Head of caudate nucleus (tissue), 42 donors: ENCODE measurements at regions of chr2 and their contacts with region 1.

Region 1: DNA sequence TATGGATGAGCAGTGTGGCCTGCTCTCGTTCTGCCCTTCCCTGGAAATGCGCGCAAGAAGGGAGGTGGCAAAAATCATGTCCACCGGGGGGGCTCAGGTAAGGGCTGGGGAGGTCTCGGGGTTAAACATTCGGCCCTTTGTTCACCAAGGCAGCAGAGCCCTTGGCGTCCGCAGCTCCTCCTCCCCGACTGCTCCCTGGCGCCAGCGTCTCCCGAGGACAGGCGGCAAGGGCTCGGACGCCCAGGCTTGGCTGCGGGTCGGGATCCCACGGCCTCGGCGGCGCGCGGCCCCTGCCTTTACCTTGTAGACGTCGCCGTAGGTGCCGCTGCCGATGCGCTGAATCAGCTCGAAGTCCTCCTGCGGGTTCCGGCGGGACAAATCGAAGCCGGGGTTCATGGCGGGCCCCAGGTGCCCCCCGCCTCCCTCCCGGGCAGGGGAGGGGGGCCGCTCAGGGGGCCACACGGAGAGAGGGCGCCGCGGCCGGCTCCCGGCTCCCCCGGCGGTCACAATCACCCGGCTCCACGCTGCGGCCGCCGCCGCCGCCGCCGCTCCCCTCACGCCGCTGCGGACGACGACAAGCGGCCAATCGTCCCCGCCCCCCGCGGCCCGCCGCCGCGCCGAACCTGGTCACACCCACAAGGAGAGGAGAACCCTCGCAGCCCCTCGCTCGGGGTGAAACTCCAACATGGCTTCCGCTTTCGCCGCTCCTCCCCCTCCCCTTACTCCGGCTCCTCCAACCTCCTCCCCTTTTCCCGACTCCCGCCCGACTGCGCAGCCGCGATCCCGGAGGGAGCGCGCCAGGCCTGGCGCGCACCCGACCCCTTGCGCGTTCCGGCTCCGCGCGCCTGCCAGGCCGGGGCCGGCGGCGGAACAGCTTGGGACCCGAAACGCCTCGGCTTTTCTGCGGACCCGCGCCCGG is at the start of gene MAP4K3:
- DNase-seq: peak; percentile 76 to 96 (median 92)

Region 2: GRCh38 chr2:39338502-39338901 is 98.3 kb before region 1 on chr2:
- intact Hi-C with region 1: no loop called
- DNase-seq: no peak

Region 3: GRCh38 chr2:39642051-39642742 is 205.3 kb after region 1 on chr2:
- intact Hi-C with region 1: no loop called
- DNase-seq: peak in 40 of 42 donors; percentile 18 to 88 (median 67)

Region 4: GRCh38 chr2:39778962-39779851 is 342.4 kb after region 1 on chr2 and contains the start of gene THUMPD2:
- intact Hi-C with region 1: loop called (anchors 5 kb)
- DNase-seq: peak; percentile 17 to 90 (median 72)